Activated CD4-positive, alpha-beta memory T cell treated with anti-CD3 and anti-CD28 coated beads, Interleukin-2, amount 10 ng/mL, durations not matched to agents 7 days and 5 days (primary cell): ENCODE measurements at regions of chr5 and their contacts with region 1.

Region 1: GRCh38 chr5:95822542-95823181 is at the start of gene GLRX:
- DNase-seq: peak; percentile 72
- H3K4me3 Mint-ChIP-seq: peak within 1 kb of the TSS; percentile 91
- H3K27ac Mint-ChIP-seq: peak within 1 kb of the TSS; percentile 88
- H3K4me1 Mint-ChIP-seq: peaks cover 71% of the 10 kb centered on the region
- H3K27me3 Mint-ChIP-seq: no peaks in the 10 kb centered on the region
- total RNA-seq, gene GLRX: 71.6 to 72.5 TPM

Region 2: DNA sequence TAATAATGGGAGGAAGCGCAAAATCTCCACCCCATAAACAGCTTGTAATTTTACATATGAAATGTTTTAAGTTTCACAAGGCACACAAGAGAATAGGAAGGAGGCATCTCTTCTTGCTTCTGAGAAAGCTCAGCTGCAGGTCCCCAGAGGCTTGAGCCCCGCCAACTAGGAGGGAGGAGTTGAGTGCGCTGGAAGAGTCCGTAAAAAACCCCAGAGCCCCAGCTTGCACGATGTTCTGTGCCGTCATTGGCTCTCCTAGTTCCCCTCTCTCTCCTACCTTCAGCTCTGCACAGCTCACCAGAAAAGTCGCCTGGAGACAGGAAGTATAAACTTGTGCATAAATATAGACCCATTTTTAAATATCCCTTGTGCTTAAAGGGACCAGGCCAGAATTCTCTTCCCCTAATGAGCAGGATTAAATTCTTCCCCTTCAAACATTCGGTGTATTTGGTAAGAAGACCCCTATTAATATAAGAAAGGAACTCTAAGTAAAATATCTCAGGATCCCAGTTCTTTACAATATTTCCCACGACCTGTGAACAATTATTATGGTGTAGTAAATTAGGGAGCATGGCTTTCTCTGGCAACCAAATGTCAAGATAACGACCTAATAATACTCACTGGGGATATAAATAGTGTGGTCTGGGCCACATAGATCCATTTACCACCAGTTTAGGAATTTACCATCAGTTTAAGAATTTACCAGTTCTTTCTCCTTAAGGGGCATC is 13.8 kb before region 1 on chr5:
- CTCF ChIA-PET with region 1: interaction called, 63 read pairs
- POLR2A ChIA-PET with region 1: interaction called, 113 read pairs
- DNase-seq: peak; percentile 81
- H3K4me3 Mint-ChIP-seq: peak overlapping the region; percentile 50
- H3K27ac Mint-ChIP-seq: peak overlapping the region; percentile 78
- H3K4me1 Mint-ChIP-seq: peaks cover 60% of the 10 kb centered on the region
- H3K27me3 Mint-ChIP-seq: no peaks in the 10 kb centered on the region

Region 3: GRCh38 chr5:95835682-95836385 is 13.2 kb after region 1 on chr5:
- CTCF ChIA-PET with region 1: interaction called, 45 read pairs
- POLR2A ChIA-PET with region 1: interaction called, 104 read pairs
- DNase-seq: no peak
- H3K4me3 Mint-ChIP-seq: peak overlapping the region; percentile 83
- H3K27ac Mint-ChIP-seq: peak overlapping the region; percentile 89
- H3K4me1 Mint-ChIP-seq: peaks cover 44% of the 10 kb centered on the region
- H3K27me3 Mint-ChIP-seq: no peaks in the 10 kb centered on the region

Region 4: GRCh38 chr5:95870105-95870672 is 47.5 kb after region 1 on chr5:
- CTCF ChIA-PET with region 1: no interaction called
- POLR2A ChIA-PET with region 1: interaction called, 11 read pairs
- DNase-seq: peak; percentile 37
- H3K4me3 Mint-ChIP-seq: peak overlapping the region; percentile 62
- H3K27ac Mint-ChIP-seq: peak overlapping the region; percentile 89
- H3K4me1 Mint-ChIP-seq: peaks cover 47% of the 10 kb centered on the region
- H3K27me3 Mint-ChIP-seq: no peaks in the 10 kb centered on the region

Region 5: DNA sequence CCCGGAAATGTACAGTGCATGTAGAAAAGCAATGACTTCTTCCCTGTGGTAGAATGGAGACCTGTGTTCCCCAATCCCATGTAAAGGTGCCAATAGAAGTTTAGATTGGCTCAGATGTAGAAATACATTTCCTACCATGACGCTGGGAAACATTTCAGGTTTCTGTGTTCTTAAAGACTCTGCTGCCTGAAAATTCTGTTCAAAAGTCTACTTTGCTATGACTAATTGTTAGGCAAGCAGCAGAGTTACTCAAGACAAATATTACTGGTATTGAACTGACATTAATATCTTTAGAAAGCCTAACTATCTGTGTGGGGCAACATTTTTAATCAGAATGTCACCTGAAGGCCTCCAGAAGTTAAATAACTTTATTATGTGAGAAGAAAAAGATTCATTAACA is 214.5 kb after region 1 on chr5:
- CTCF ChIA-PET with region 1: no interaction called
- POLR2A ChIA-PET with region 1: no interaction called
- DNase-seq: no peak
- H3K4me3 Mint-ChIP-seq: no peak overlapping the region
- H3K27ac Mint-ChIP-seq: no peak overlapping the region
- H3K4me1 Mint-ChIP-seq: no peaks in the 10 kb centered on the region
- H3K27me3 Mint-ChIP-seq: no peaks in the 10 kb centered on the region